ENCODE measurements at regions of chr13 and their contacts with region 1.

Region 1: GRCh38 chr13:100235311-100235901 is 146.5 kb downstream of the PCCA start:
- DNase-seq: no peak
- H3K4me3 Mint-ChIP-seq: no peak overlapping the region
- H3K27ac Mint-ChIP-seq: no peak overlapping the region
- H3K4me1 Mint-ChIP-seq: peaks cover 8% of the 10 kb centered on the region
- H3K27me3 Mint-ChIP-seq: no peaks in the 10 kb centered on the region

Region 2: DNA sequence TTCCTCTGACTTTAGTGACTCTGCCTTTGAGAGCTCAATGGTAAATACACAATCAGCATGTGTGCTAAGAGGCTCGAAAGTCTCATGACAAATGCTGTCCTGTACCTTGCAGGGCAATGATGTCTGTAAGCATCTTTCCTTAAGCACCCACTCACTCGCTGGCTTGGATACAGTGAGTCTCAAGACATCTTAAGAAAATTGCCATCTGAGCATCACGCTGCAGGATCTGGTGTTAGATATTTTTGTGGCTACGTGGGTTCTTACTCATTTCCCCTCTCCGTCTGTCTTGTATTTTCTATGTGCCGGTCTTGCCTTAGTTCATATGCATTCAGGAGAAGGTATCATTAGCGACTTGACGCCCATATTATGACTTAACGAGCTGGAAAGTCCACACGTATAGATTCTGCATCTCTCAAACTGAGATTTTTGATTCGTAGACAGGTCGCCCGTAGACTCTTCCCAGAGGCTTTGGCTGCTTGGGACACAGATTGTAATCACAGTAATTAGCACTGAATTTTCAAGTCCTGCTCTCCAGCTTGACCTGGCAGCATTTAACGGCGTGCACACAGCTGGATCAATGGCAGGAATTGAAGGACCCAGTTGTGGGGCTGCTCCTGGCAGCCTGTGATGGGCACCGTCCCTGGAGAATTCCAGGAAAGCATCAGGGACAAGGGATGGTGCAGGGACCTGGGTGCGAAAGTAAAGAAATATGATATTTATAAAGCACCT is 495.0 kb before region 1 on chr13:
- CTCF ChIA-PET with region 1: no interaction called
- DNase-seq: no peak
- H3K4me3 Mint-ChIP-seq: no peak overlapping the region
- H3K27ac Mint-ChIP-seq: no peak overlapping the region
- H3K4me1 Mint-ChIP-seq: peaks cover 4% of the 10 kb centered on the region
- H3K27me3 Mint-ChIP-seq: peaks cover 3% of the 10 kb centered on the region

Region 3: GRCh38 chr13:99895995-99896786 is 339.2 kb before region 1 on chr13:
- CTCF ChIA-PET with region 1: interaction called, 10 read pairs
- DNase-seq: no peak
- H3K4me3 Mint-ChIP-seq: peak overlapping the region; percentile 61
- H3K27ac Mint-ChIP-seq: no peak overlapping the region
- H3K4me1 Mint-ChIP-seq: peaks cover 22% of the 10 kb centered on the region
- H3K27me3 Mint-ChIP-seq: peaks cover 76% of the 10 kb centered on the region

Region 4: GRCh38 chr13:99916366-99917103 is 318.9 kb before region 1 on chr13:
- CTCF ChIA-PET with region 1: interaction called, 10 read pairs
- DNase-seq: peak; percentile 36
- H3K4me3 Mint-ChIP-seq: no peak overlapping the region
- H3K27ac Mint-ChIP-seq: no peak overlapping the region
- H3K4me1 Mint-ChIP-seq: peaks cover 32% of the 10 kb centered on the region
- H3K27me3 Mint-ChIP-seq: peaks cover 22% of the 10 kb centered on the region

Region 5: DNA sequence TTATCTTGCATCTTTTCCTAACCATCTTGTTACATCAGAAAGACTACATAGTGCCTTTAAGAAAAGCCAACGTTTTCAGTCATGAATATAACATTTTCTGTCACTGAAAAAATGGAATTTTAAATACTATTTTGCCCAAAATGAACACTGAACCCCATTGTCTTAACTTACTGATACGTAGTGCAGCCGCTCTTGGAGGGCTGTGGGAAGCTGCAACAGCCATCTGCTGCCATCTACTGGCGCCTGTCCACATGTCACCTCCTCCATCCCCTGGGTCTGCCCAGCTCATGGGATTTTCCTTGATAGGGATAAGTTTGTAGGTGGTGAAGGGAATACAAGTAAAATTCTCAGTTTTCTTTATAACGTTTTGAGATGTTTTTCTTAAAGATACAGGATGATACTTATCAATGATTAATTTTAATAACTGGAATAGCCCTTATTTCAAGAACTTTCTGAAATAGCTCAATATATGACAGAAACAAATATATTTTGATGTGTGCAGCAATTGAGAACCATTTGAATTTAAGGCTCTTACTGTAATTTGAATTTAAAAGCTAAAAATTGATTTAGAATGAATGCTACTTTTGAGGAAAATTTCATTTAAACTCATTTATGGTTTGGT is 279.5 kb after region 1 on chr13:
- CTCF ChIA-PET with region 1: interaction called, 21 read pairs
- DNase-seq: peak; percentile 83
- H3K4me3 Mint-ChIP-seq: no peak overlapping the region
- H3K27ac Mint-ChIP-seq: no peak overlapping the region
- H3K4me1 Mint-ChIP-seq: peaks cover 18% of the 10 kb centered on the region
- H3K27me3 Mint-ChIP-seq: no peaks in the 10 kb centered on the region